ENCODE measurements at regions of chr1 and their contacts with region 1.

Region 1: GRCh38 chr1:34013958-34014737 is 150.3 kb downstream of the HMGB4 start:
- DNase-seq: peak; percentile 9 to 90
- H3K4me3 ChIP-seq: no peak overlapping the region
- H3K27ac ChIP-seq: no peak overlapping the region
- H3K4me1 ChIP-seq: peaks cover 0 to 5% (median 2%) of the 10 kb centered on the region in 4 experiments; a peak in 4 of 7 replicates
- H3K27me3 ChIP-seq: no peaks in the 10 kb centered on the region
- CTCF ChIP-seq: peak; percentile 80 to 96 (median 90)
- EP300 ChIP-seq: no peak
- POLR2A ChIP-seq: no peak
- RAD21 ChIP-seq: peak; percentile 68 to 78

Region 2: GRCh38 chr1:33633019-33633801 is 380.9 kb before region 1 on chr1:
- CTCF ChIA-PET with region 1: interaction called, 18 read pairs
- POLR2A ChIA-PET with region 1: no interaction called
- DNase-seq: peak; percentile 64 to 95
- H3K4me3 ChIP-seq: no peak overlapping the region
- H3K27ac ChIP-seq: no peak overlapping the region
- H3K4me1 ChIP-seq: peaks cover 10 to 18% (median 12%) of the 10 kb centered on the region in 4 experiments
- H3K27me3 ChIP-seq: peaks cover 0 to 2% (median 0%) of the 10 kb centered on the region in 4 experiments; a peak in 1 of 7 replicates
- CTCF ChIP-seq: peak; percentile 99 to 100 (median 100)
- EP300 ChIP-seq: no peak
- POLR2A ChIP-seq: no peak
- RAD21 ChIP-seq: peak; percentile 65 to 71

Region 3: DNA sequence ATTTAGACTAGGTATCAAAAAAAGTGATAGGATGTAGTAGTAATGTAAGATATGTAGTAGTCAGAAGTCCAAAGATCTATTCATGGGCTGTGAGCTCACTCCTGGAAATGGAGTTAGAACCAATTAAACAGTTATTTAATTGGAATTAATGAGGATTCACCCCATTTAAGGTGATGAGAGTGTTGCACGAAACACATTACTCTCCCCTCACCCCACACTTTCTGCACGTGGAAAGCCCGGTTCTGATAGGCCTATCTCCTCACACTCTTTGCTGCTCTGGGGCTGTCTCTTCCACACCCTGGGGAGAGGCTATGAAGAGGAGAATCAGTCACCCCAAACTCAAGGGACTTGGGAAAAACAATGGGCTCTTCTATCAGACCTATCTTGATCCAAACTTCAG is 23.9 kb before region 1 on chr1:
- CTCF ChIA-PET with region 1: interaction called, 14 read pairs
- POLR2A ChIA-PET with region 1: no interaction called
- DNase-seq: no peak
- H3K4me3 ChIP-seq: no peak overlapping the region
- H3K27ac ChIP-seq: no peak overlapping the region
- H3K4me1 ChIP-seq: peaks cover 0 to 2% (median 0%) of the 10 kb centered on the region in 4 experiments; a peak in 2 of 7 replicates
- H3K27me3 ChIP-seq: no peaks in the 10 kb centered on the region
- CTCF ChIP-seq: no peak
- EP300 ChIP-seq: no peak
- POLR2A ChIP-seq: no peak
- RAD21 ChIP-seq: no peak

Region 4: DNA sequence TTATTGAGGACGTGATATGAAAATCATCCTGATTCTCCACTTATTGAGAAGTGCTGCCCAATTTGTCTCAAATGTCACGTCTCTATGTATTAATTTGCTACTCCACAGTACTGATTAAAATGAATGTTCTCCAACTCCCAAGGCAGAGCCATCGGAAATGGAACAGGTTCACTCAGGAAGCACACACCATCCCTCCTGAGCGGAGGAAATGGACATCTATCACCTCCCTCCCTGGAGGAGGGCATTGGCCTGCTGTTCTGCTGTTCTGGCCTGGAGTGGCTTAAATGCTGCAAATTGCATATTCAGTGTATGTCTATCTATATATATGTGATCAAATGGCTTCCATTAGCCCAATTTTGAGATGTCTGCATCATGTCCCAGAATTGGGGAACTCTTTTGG is 10.3 kb after region 1 on chr1:
- CTCF ChIA-PET with region 1: interaction called, 35 read pairs
- POLR2A ChIA-PET with region 1: no interaction called
- DNase-seq: no peak
- H3K4me3 ChIP-seq: no peak overlapping the region
- H3K27ac ChIP-seq: no peak overlapping the region
- H3K4me1 ChIP-seq: peaks cover under 1 to 12% (median 4%) of the 10 kb centered on the region in 4 experiments; a peak in 6 of 7 replicates
- H3K27me3 ChIP-seq: no peaks in the 10 kb centered on the region
- CTCF ChIP-seq: no peak
- EP300 ChIP-seq: no peak
- POLR2A ChIP-seq: no peak
- RAD21 ChIP-seq: no peak

Region 5: GRCh38 chr1:34057347-34058130 is 43.4 kb after region 1 on chr1:
- CTCF ChIA-PET with region 1: interaction called, 14 read pairs
- POLR2A ChIA-PET with region 1: no interaction called
- DNase-seq: peak in 1 of 2 experiments; percentile 59
- H3K4me3 ChIP-seq: no peak overlapping the region
- H3K27ac ChIP-seq: no peak overlapping the region
- H3K4me1 ChIP-seq: peaks cover 4 to 10% (median 6%) of the 10 kb centered on the region in 4 experiments; a peak in 6 of 7 replicates
- H3K27me3 ChIP-seq: no peaks in the 10 kb centered on the region
- CTCF ChIP-seq: no peak
- EP300 ChIP-seq: no peak
- POLR2A ChIP-seq: no peak
- RAD21 ChIP-seq: no peak